Astrocyte of the cerebellum (primary cell): ENCODE measurements at regions of chr18 and their contacts with region 1.

Region 1: DNA sequence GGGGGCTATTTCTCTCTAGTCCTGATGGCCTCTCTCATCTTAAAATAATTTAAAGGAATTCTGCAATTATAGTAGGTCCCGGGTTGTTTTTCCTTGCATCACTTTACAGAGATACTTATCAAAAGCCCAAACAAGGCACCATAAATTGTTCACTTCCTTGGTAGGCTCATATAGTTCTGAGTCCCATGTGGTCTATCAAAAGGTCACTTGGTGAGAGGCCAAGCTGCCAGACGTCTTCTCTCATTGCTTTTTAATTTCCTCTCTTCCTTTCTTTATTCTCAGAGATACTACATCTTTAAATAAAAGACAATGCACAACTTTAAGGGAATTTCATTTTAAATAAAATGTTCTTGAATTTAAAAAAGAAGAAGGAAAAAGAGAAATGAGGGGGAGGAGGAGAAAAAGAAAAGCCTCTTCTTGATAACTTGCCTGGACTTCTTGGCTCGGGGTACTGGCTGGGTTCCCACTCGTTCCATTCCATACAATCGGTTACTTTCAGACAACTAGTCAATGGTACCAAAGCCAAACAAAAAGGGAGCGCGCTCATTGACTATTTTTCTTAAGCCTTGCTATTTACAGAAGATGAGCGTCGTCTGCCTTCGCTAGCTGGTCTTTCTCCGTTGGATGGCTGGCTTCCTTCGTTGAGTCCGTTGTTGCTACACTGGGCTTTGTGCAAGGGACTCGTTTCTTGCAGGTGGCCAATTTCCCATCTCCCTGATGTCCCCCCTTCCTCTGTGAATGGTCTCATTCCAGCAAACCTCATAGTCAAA is 260.6 kb downstream of the ZNF516 start:
- DNase-seq: no peak
- H3K4me3 ChIP-seq: no peak overlapping the region
- CTCF ChIP-seq: no peak

Region 2: DNA sequence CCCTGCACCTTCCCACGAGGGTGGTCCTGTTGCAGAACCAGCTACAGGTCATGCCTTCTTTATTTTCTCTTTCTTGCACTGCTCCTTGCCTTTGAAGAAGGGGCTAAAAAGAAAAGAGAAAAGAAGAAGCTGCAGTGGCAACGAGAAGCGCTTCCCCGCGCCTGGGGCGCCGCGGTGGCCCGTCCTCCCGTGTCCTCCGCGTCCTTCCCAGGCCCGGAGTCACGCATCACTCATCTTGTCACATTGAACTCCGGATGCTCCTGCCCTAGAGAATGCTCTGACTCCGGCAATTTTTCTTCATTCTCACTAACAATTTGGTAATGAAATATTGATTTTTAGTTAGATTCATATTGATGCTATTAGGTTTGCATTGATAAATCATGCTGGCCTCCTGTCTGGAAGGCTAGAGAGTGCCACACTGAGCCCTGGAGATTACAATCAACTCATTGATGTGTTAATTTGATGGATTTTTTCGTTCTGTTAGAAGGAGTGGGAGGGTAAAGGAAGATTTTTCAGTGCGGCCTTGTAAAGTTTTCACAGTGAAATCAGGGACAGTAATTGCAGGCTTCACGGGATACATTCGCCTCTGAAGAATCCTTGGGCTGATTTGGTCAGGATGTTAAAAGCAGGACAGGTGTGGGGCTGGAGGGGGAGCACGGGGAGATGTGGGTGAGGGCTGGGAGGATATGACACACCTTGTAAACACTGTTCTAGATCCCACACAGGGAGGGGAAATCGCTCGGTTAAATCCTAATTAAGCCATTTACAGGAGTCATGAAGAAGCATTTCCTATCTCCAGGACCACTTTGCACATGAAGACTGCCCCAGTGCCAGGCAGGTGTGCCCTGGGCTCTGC is 88.7 kb before region 1 on chr18:
- in situ Hi-C with region 1: no loop called
- DNase-seq: no peak
- H3K4me3 ChIP-seq: no peak overlapping the region
- CTCF ChIP-seq: no peak

Region 3: GRCh38 chr18:76314015-76314414 is 79.5 kb after region 1 on chr18:
- in situ Hi-C with region 1: no loop called
- DNase-seq: no peak
- H3K4me3 ChIP-seq: no peak overlapping the region
- CTCF ChIP-seq: no peak

Region 4: GRCh38 chr18:76340410-76340809 is 105.9 kb after region 1 on chr18:
- in situ Hi-C with region 1: loop called (anchors 5 kb)
- DNase-seq: no peak
- H3K4me3 ChIP-seq: no peak overlapping the region
- CTCF ChIP-seq: no peak